ENCODE measurements at regions of chr19 and their contacts with region 1.

Region 1: GRCh38 chr19:28553005-28553404 is 659.9 kb downstream of the UQCRFS1 start:
- DNase-seq: no peak
- H3K4me3 Mint-ChIP-seq: no peak overlapping the region
- H3K27ac Mint-ChIP-seq: no peak overlapping the region
- H3K4me1 Mint-ChIP-seq: peaks cover 20% of the 10 kb centered on the region
- H3K27me3 Mint-ChIP-seq: no peaks in the 10 kb centered on the region

Region 2: GRCh38 chr19:28419312-28419711 is 133.7 kb before region 1 on chr19:
- intact Hi-C with region 1: no loop called
- DNase-seq: no peak
- H3K4me3 Mint-ChIP-seq: no peak overlapping the region
- H3K27ac Mint-ChIP-seq: no peak overlapping the region
- H3K4me1 Mint-ChIP-seq: peaks cover 15% of the 10 kb centered on the region
- H3K27me3 Mint-ChIP-seq: peaks cover 6% of the 10 kb centered on the region

Region 3: GRCh38 chr19:28466107-28467045 is 86.6 kb before region 1 on chr19:
- intact Hi-C with region 1: loop called (anchors 5 kb)
- DNase-seq: peak; percentile 52
- H3K4me3 Mint-ChIP-seq: no peak overlapping the region
- H3K27ac Mint-ChIP-seq: peak overlapping the region; percentile 68
- H3K4me1 Mint-ChIP-seq: peaks cover 75% of the 10 kb centered on the region
- H3K27me3 Mint-ChIP-seq: no peaks in the 10 kb centered on the region

Region 4: DNA sequence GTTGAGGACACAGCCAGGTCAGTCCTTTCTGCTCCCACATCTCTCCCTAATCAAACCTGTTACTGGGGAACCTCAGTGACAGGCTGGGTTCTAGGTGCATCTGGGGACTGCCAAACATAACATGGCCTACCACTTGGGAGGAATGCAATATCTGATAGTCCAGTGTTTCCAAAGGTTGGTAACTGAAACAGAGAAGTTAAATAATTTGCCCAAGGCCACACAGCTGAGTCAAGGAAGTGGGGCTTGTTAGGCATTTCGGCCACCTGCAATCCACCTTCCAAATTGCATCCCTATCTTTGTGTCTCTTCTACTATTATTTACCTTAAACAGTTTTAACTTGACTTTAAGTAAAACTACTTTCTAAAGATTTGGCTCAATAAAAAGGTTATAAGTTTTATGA is 71.3 kb before region 1 on chr19:
- intact Hi-C with region 1: loop called (anchors 1 kb)
- DNase-seq: no peak
- H3K4me3 Mint-ChIP-seq: no peak overlapping the region
- H3K27ac Mint-ChIP-seq: no peak overlapping the region
- H3K4me1 Mint-ChIP-seq: peaks cover 10% of the 10 kb centered on the region
- H3K27me3 Mint-ChIP-seq: peaks cover 2% of the 10 kb centered on the region

Measured in activated T-helper 1 cell treated with anti-CD3 and anti-CD28 coated beads, Interleukin-12 subunit alpha, Interleukin-12 subunit beta, Interleukin-2, Interleukin-4 antibody, amounts not matched to agents 30 ng/mL and 10 ng/mL and 1 ng/mL, durations not matched to agents 14 hours and 24 hours and 36 hours (primary cell).